MCF 10A (cell line): ENCODE measurements at regions of chr20 and their contacts with region 1.

Region 1: GRCh38 chr20:6265204-6265904 is 142.5 kb upstream of the FERMT1 start:
- DNase-seq: peak; percentile 76
- H3K4me3 Mint-ChIP-seq: peak overlapping the region; percentile 30
- H3K27ac Mint-ChIP-seq: peak overlapping the region; percentile 82
- H3K4me1 Mint-ChIP-seq: peaks cover 11% of the 10 kb centered on the region
- H3K27me3 Mint-ChIP-seq: no peaks in the 10 kb centered on the region
- CTCF ChIP-seq: peak; percentile 57

Region 2: GRCh38 chr20:6253396-6253795 is 12.0 kb before region 1 on chr20:
- CTCF ChIA-PET with region 1: interaction called, 13 read pairs
- POLR2A ChIA-PET with region 1: interaction called, 4 read pairs
- intact Hi-C with region 1: no loop called
- DNase-seq: no peak
- H3K4me3 Mint-ChIP-seq: no peak overlapping the region
- H3K27ac Mint-ChIP-seq: no peak overlapping the region
- H3K4me1 Mint-ChIP-seq: no peaks in the 10 kb centered on the region
- H3K27me3 Mint-ChIP-seq: no peaks in the 10 kb centered on the region
- CTCF ChIP-seq: no peak

Region 3: DNA sequence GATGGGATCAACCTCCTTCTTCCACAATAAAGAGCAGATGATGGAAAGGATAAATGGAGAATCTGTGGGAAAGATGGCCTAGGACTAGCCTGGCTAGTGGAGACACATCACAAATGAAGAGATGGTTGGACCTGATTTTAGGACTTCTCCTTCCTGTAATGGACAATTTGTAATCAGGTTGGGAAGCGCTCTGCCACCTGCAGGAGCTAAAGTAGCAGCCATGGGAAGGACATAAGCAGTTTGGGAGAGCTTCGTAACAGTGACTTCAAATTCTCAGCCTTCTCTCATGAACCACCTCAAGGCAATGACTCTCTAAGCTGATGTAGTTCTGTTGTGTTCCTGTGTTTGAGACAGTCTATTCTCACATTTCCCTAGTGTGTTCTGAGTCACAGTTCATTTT is 364.2 kb after region 1 on chr20:
- CTCF ChIA-PET with region 1: interaction called, 47 read pairs
- POLR2A ChIA-PET with region 1: interaction called, 3 read pairs
- intact Hi-C with region 1: loop called (anchors 2 kb)
- DNase-seq: no peak
- H3K4me3 Mint-ChIP-seq: no peak overlapping the region
- H3K27ac Mint-ChIP-seq: no peak overlapping the region
- H3K4me1 Mint-ChIP-seq: peaks cover 6% of the 10 kb centered on the region
- H3K27me3 Mint-ChIP-seq: no peaks in the 10 kb centered on the region
- CTCF ChIP-seq: no peak

Region 4: DNA sequence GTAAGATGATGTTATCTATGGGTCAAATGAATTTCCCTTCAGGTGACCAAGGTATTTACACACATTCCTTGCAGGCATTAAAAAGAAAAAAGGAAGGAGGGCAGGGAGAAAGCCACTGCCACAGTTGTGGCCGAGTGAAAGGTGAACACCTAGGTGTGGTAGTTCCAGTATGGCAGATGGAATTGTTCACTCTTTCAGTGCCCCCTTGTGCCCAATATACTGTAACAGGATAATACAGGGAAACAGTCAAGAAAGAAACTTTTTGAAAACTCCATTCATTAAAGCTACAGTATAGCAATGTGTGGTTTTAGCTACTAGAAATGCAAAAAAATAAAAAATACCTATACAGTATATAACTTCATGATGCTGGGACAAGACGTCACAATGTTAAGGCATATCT is 554.3 kb after region 1 on chr20:
- CTCF ChIA-PET with region 1: interaction called, 12 read pairs
- POLR2A ChIA-PET with region 1: no interaction called
- intact Hi-C with region 1: loop called (anchors 1 kb)
- DNase-seq: peak; percentile 42
- H3K4me3 Mint-ChIP-seq: no peak overlapping the region
- H3K27ac Mint-ChIP-seq: no peak overlapping the region
- H3K4me1 Mint-ChIP-seq: peaks cover 4% of the 10 kb centered on the region
- H3K27me3 Mint-ChIP-seq: no peaks in the 10 kb centered on the region
- CTCF ChIP-seq: peak; percentile 34

Region 5: GRCh38 chr20:7926767-7927166 is 1661.4 kb after region 1 on chr20:
- CTCF ChIA-PET with region 1: interaction called, 4 read pairs
- POLR2A ChIA-PET with region 1: no interaction called
- intact Hi-C with region 1: loop called (anchors 5 kb)
- DNase-seq: peak; percentile 50
- H3K4me3 Mint-ChIP-seq: no peak overlapping the region
- H3K27ac Mint-ChIP-seq: no peak overlapping the region
- H3K4me1 Mint-ChIP-seq: peaks cover 9% of the 10 kb centered on the region
- H3K27me3 Mint-ChIP-seq: no peaks in the 10 kb centered on the region
- CTCF ChIP-seq: peak; percentile 59